ENCODE measurements at regions of chr17 and their contacts with region 1.

Region 1: GRCh38 chr17:8057691-8058114 is 18.8 kb downstream of the ALOX15B start:
- DNase-seq: peak; percentile 79
- CTCF ChIP-seq: peak; percentile 79

Region 2: GRCh38 chr17:7745748-7746470 is 311.8 kb before region 1 on chr17:
- in situ Hi-C with region 1: loop called (anchors 10 kb)
- DNase-seq: no peak
- CTCF ChIP-seq: no peak